Heart left ventricle (tissue), 16 donors: ENCODE measurements at regions of chr18 and their contacts with region 1.

Region 1: GRCh38 chr18:45526114-45526841 is 89.0 kb upstream of the SLC14A2 start:
- DNase-seq: no peak
- ATAC-seq: peak in 3 of 4 donors; percentile 33 to 57 (median 47)
- H3K4me3 ChIP-seq: no peak overlapping the region
- H3K27ac ChIP-seq: peak overlapping the region in 2 of 12 donors; percentile 37 to 45
- H3K4me1 ChIP-seq: peaks cover 0 to 21% (median 0%) of the 10 kb centered on the region in 12 donors
- H3K27me3 ChIP-seq: no peaks in the 10 kb centered on the region
- CTCF ChIP-seq: peak in 7 of 12 donors; percentile 12 to 44 (median 30)
- POLR2A ChIP-seq: no peak

Region 2: GRCh38 chr18:45275367-45276113 is 250.7 kb before region 1 on chr18:
- intact Hi-C with region 1: loop called in 1 of 10 experiments (anchors 10 kb)
- DNase-seq: no peak
- ATAC-seq: no peak
- H3K4me3 ChIP-seq: no peak overlapping the region
- H3K27ac ChIP-seq: no peak overlapping the region
- H3K4me1 ChIP-seq: no peaks in the 10 kb centered on the region
- H3K27me3 ChIP-seq: no peaks in the 10 kb centered on the region
- CTCF ChIP-seq: peak; percentile 55 to 91 (median 72)
- POLR2A ChIP-seq: no peak

Region 3: GRCh38 chr18:45621061-45621511 is 94.8 kb after region 1 on chr18:
- intact Hi-C with region 1: loop called in 1 of 10 experiments (anchors 10 kb)
- DNase-seq: peak in 2 of 5 donors; percentile 19 to 32
- ATAC-seq: peak in 1 of 4 donors; percentile 27
- H3K4me3 ChIP-seq: no peak overlapping the region
- H3K27ac ChIP-seq: no peak overlapping the region
- H3K4me1 ChIP-seq: peaks cover 0 to 26% (median 4%) of the 10 kb centered on the region in 12 donors
- H3K27me3 ChIP-seq: no peaks in the 10 kb centered on the region
- CTCF ChIP-seq: peak; percentile 79 to 92 (median 88)
- POLR2A ChIP-seq: no peak

Region 4: GRCh38 chr18:46042571-46043123 is 516.4 kb after region 1 on chr18:
- intact Hi-C with region 1: no loop called
- DNase-seq: no peak
- ATAC-seq: peak in 3 of 4 donors; percentile 31 to 37 (median 36)
- H3K4me3 ChIP-seq: no peak overlapping the region
- H3K27ac ChIP-seq: no peak overlapping the region
- H3K4me1 ChIP-seq: peaks cover 0 to 56% (median 0%) of the 10 kb centered on the region in 12 donors
- H3K27me3 ChIP-seq: no peaks in the 10 kb centered on the region
- CTCF ChIP-seq: no peak
- POLR2A ChIP-seq: no peak